Mammary epithelial cell (primary cell): ENCODE measurements at regions of chr21 and their contacts with region 1.

Region 1: GRCh38 chr21:31354604-31355443 is 10.8 kb upstream of the TIAM1 start:
- DNase-seq: peak; percentile 99
- H3K4me3 ChIP-seq: no peak overlapping the region
- H3K27ac ChIP-seq: peak overlapping the region; percentile 91
- H3K4me1 ChIP-seq: peaks cover 37% of the 10 kb centered on the region
- H3K27me3 ChIP-seq: no peaks in the 10 kb centered on the region
- CTCF ChIP-seq: no peak

Region 2: DNA sequence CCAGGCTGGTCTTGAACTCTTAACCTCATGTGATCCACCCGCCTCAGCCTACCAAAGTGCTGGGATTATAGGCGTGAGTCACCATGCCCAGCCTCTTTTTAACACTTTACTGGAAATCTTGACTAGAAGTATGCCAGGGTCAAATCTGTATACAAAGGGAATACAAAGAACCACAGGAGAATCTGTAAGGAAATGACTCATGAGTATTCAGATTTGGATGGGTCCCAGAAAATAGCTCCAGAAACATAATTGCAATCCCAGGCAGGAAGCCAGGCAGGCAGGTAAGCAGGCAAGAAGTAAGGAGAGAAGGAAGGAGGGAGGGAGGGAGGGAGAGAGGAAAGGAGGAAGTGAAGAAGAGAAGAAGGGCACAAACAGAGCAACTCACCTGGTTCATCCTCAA is 12.0 kb after region 1 on chr21:
- CTCF ChIA-PET with region 1: no interaction called
- dilution Hi-C with region 1: no loop called
- in situ Hi-C with region 1: no loop called
- intact Hi-C with region 1: loop called (anchors 1 kb)
- DNase-seq: peak; percentile 95
- H3K4me3 ChIP-seq: no peak overlapping the region
- H3K27ac ChIP-seq: no peak overlapping the region
- H3K4me1 ChIP-seq: peaks cover 11% of the 10 kb centered on the region
- H3K27me3 ChIP-seq: no peaks in the 10 kb centered on the region
- CTCF ChIP-seq: no peak

Region 3: GRCh38 chr21:31443736-31444521 is 89.1 kb after region 1 on chr21:
- CTCF ChIA-PET with region 1: no interaction called
- dilution Hi-C with region 1: no loop called
- in situ Hi-C with region 1: no loop called
- intact Hi-C with region 1: no loop called
- DNase-seq: no peak
- H3K4me3 ChIP-seq: no peak overlapping the region
- H3K27ac ChIP-seq: no peak overlapping the region
- H3K4me1 ChIP-seq: no peaks in the 10 kb centered on the region
- H3K27me3 ChIP-seq: no peaks in the 10 kb centered on the region
- CTCF ChIP-seq: no peak

Region 4: DNA sequence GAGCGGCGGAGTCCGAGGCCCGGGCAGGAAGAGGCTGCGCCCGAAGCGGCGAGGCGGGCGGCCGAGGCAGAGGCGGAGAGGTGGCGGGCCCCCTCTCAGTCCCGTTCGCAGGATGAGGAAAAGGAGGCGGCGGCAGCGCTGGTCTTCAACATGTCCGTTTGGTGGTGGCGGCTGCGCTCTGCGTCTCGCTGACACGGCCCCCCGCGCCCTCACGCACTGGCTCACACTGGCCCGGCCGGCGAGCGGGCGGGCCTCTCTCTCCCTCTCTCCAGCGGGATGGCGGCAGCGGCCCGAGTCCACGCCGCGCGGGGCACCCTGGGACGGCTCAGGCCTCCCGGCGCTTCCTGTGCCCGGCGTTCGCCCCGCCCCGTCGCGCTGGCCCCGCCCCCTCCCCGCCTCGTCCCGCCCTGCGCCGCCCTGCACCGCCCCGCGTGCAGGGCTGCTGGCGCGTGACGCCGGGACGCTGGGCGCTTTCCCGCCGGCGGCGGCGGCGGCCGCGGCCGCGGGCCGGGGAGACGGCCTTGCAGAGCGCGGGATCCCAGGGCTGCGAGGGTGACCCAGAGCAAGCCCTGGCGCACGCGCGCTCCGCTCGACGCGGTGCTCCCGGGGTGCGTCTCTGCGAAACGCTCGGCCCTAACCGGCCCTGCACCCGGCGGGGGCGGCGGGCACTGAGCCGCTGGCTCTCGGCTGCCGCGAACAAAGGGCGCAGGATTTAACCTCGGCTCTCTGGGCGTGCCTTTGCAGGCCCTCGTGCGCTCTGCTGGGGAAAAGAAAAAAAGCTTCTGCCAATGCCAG is 377.2 kb after region 1 on chr21 and contains the start of gene SCAF4:
- CTCF ChIA-PET with region 1: no interaction called
- dilution Hi-C with region 1: no loop called
- in situ Hi-C with region 1: no loop called
- intact Hi-C with region 1: loop called (anchors 5 kb)
- DNase-seq: peak; percentile 87
- H3K4me3 ChIP-seq: peak within 1 kb of the TSS; percentile 81 to 94 (median 84)
- H3K27ac ChIP-seq: peak within 1 kb of the TSS; percentile 76
- H3K4me1 ChIP-seq: peaks cover 27% of the 10 kb centered on the region
- H3K27me3 ChIP-seq: no peaks in the 10 kb centered on the region
- CTCF ChIP-seq: no peak
- total RNA-seq, gene SCAF4: 9.5 to 34.8 TPM